Breast epithelium (tissue), 4 donors: ENCODE measurements at regions of chr9 and their contacts with region 1.

Region 1: DNA sequence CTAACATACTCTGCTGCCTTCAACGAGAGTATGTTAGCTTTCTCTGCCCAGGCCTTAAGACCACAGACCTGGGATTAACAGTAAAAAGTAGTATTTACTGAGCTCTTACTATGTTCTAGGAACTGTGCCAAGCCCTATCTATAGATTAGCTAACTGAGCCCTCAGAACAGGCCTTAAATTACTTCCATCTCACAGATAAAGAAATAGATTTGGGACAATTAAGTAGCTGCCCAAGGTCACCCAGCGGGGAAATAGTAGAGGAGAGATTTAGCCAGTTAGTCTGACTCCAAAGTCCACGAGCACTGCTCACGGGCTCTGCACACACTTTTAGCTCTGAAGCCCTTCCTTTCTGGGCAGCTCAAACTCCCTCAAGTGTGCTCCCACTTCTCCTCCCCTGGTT is 64.5 kb upstream of the EQTN start:
- DNase-seq: no peak
- H3K4me3 ChIP-seq: no peak overlapping the region
- H3K27ac ChIP-seq: no peak overlapping the region
- H3K4me1 ChIP-seq: no peaks in the 10 kb centered on the region
- H3K27me3 ChIP-seq: no peaks in the 10 kb centered on the region
- CTCF ChIP-seq: no peak
- POLR2A ChIP-seq: no peak

Region 2: DNA sequence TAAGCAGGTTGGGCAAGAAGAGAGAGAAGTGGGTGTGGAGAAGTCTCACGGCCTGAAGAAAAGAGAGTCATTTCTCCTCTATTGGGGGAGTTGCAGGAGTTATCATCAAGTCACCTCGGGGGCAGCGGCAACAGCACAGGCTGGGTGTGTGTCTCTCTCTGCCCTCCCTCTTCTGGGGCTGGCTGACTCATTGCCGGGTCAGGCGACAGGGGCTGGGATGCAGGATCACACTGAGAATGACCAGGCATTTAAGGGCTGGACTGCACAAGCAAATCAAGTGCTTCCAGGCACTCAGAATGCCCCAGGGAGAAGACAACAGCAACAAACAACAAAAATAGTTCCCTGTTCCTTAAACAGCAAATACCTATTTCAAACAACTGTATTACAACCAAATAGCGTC is 58.3 kb before region 1 on chr9:
- intact Hi-C with region 1: no loop called
- DNase-seq: no peak
- H3K4me3 ChIP-seq: no peak overlapping the region
- H3K27ac ChIP-seq: peak overlapping the region in 1 of 2 donors; percentile 32
- H3K4me1 ChIP-seq: no peaks in the 10 kb centered on the region
- H3K27me3 ChIP-seq: no peaks in the 10 kb centered on the region
- CTCF ChIP-seq: no peak
- POLR2A ChIP-seq: no peak

Region 3: DNA sequence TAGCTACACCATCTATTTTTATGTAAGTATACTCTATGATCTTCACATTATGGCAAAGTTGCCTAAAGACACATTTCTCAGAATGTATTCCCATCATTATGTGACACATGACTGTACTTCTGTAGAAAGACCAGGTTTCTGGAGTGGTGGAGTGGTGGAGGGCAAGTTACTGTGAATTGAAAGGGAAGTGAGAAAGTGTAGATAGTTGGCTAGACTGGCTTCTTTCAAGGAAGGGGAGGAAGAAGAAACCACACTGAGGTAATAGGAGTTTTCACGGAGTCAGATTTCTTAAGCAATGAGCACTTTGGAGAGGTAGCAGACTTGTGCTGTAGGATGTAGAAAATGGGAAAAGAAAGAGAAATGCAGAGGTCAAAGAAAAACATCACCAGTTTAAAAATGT is 13.6 kb before region 1 on chr9:
- intact Hi-C with region 1: loop called (anchors 2 kb)
- DNase-seq: no peak
- H3K4me3 ChIP-seq: no peak overlapping the region
- H3K27ac ChIP-seq: no peak overlapping the region
- H3K4me1 ChIP-seq: no peaks in the 10 kb centered on the region
- H3K27me3 ChIP-seq: no peaks in the 10 kb centered on the region
- CTCF ChIP-seq: no peak
- POLR2A ChIP-seq: no peak